Activated CD8-positive, alpha-beta memory T cell treated with anti-CD3 and anti-CD28 coated beads, Interleukin-2, amount 10 ng/mL, durations not matched to agents 7 days and 5 days (primary cell): ENCODE measurements at regions of chr1 and their contacts with region 1.

Region 1: GRCh38 chr1:31789259-31790065 is 25.3 kb upstream of the ADGRB2 start:
- DNase-seq: peak; percentile 98
- ATAC-seq: peak; percentile 82
- H3K4me3 Mint-ChIP-seq: peak overlapping the region; percentile 76
- H3K27ac Mint-ChIP-seq: peak overlapping the region; percentile 35
- H3K4me1 Mint-ChIP-seq: peaks cover 11% of the 10 kb centered on the region
- H3K27me3 Mint-ChIP-seq: no peaks in the 10 kb centered on the region

Region 2: DNA sequence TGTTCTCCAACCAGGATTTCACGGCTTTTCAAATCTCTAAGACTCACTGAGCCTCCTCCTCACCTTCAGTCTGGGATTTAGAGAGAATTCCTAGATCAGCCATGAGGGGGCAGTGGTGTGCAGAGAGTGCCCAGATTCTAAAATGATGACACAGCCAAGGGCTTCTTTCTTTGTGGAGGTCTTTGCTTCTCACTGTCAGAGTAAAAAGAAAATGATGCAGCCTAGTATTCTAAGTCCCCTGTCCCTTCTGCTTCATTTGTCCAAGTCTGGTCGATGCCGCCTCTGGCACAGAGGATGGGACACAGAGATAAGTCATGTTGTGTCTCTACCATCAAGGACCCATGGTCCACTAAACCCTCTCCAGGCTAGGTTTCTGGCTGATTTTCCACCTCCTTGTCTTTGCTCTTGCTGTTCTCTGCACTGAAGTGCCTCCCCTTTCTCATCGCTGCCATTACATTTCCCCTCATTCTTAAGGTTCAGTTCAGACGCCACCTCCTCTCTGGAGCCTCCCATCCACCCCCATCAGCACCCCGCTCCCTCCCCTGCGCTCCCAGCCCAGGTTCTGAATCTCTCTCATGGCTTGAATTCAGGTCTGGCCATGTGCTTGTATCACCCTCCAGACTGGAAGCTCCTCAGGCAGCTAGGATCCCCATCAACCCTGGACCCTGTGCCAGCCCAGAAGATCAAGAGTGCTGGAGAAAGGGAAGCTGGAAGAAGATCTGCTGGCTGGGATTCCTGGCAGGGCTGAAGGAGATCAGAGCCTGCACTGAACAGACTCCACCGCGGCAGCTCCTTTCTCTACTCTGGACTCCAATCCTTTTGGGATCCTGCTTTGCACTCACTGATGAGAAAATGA is 225.1 kb before region 1 on chr1:
- CTCF ChIA-PET with region 1: interaction called, 14 read pairs
- DNase-seq: peak; percentile 58
- ATAC-seq: peak; percentile 45
- H3K4me3 Mint-ChIP-seq: no peak overlapping the region
- H3K27ac Mint-ChIP-seq: no peak overlapping the region
- H3K4me1 Mint-ChIP-seq: no peaks in the 10 kb centered on the region
- H3K27me3 Mint-ChIP-seq: peaks cover 38% of the 10 kb centered on the region

Region 3: DNA sequence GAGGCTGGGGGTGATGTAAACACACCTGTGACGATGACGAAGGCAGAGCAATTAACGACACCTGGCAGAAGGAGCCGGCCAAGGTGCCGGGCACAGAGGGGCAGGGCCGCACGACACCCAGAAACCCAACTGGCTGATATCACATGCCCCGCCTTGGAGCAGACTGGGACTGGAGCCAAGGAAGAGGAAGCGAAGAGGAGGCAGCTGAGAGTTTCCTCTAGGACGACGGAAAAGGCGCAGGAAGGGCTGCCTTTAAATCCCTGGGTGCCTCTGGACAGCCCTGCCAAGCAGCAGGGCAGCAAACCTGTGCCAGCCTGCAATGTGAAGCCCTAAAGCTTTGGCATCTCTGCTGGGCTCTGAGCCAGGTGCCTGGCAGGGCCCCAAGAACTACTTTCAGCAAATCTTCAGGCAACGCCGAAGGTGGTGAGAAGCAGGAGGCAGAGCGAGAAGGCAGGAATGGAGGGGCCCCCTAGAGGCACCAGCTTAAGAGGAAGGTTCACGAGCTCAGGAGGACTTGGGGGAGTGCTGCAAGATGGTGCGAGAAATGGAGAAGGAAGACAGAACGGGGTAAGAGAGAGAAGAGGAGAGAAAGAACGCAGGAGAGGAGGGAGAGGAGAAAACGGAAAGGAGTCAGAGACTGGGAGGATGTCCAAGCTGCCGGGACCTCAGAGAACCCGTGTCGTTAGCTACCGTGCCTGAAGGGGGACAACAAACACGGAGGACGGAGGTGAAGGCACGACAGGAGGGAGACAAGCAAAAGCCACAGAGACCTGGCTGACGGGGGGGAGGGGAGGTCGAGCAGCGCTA is 119.5 kb before region 1 on chr1:
- CTCF ChIA-PET with region 1: interaction called, 100 read pairs
- DNase-seq: no peak
- ATAC-seq: peak; percentile 49
- H3K4me3 Mint-ChIP-seq: peak overlapping the region; percentile 14
- H3K27ac Mint-ChIP-seq: no peak overlapping the region
- H3K4me1 Mint-ChIP-seq: peaks cover 7% of the 10 kb centered on the region
- H3K27me3 Mint-ChIP-seq: peaks cover 30% of the 10 kb centered on the region

Region 4: DNA sequence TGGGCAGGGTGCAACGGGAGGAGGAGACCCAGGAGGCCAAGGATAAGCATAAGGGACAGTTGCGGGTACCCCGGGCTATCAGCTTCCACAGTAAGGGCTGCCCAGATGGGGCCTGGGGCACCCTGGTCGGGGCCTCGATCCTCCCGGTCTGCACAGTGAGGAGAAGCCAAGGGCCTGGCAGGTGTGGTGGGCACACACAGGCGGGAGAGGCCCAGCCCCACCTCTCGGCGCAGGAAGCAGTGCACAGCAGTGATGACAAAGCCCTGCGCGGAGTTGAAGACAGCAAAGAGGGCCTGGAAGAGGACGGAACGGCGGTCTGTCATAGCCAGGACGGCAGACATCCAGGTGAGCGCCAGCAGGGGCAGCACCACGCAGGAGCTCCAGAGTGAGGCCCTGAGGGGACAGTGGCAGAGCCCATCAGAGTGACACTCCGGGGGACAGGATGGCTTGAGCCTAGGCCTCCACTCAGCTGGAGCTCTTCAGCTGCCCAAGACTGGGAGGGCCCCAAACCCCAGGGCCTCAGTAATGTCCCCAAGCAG is 56.6 kb before region 1 on chr1:
- CTCF ChIA-PET with region 1: no interaction called
- DNase-seq: no peak
- ATAC-seq: no peak
- H3K4me3 Mint-ChIP-seq: no peak overlapping the region
- H3K27ac Mint-ChIP-seq: no peak overlapping the region
- H3K4me1 Mint-ChIP-seq: no peaks in the 10 kb centered on the region
- H3K27me3 Mint-ChIP-seq: no peaks in the 10 kb centered on the region

Region 5: DNA sequence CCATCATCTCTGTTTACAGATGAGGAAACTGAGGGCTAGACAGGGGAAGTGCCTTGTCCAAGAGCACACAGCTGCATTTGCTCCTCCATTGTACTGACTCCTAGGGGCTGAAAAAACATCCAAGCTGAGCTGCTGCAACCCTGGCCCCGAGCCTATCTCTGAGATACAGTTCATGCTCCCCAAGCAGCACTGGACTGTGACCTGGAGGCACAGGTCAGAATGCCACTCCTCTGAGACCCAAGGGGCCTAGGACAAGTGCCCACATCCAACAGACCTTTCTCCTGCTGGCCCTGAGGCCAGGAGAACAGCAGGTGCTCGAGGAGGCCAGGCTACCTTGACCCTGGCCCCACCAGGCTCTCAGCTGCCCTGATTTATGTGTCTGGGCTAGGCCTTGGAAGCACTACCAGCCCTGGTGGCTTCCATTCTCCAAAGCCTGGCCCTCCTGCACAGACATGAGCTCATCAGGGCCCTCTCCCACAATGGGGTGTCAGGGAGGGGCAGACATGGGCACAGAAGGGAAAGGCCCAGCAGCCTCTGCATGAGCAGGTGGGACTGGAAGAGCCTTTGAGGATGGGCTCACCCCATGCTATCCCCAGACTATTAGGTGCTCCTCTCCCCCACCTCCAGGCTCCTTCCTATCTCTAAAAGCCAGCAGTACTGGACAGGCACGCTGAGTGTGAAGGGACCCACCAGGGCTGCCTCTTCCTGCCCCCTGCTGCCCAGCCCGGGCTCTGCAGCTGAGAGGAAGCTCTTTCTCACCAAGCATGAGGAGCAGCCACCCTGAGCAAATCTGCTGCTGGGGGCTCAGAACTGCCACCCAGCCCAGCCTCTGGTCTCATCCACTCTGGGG is 44.1 kb before region 1 on chr1:
- CTCF ChIA-PET with region 1: interaction called, 25 read pairs
- DNase-seq: peak; percentile 84
- ATAC-seq: peak; percentile 88
- H3K4me3 Mint-ChIP-seq: no peak overlapping the region
- H3K27ac Mint-ChIP-seq: no peak overlapping the region
- H3K4me1 Mint-ChIP-seq: peaks cover 39% of the 10 kb centered on the region
- H3K27me3 Mint-ChIP-seq: peaks cover 8% of the 10 kb centered on the region

Region 6: DNA sequence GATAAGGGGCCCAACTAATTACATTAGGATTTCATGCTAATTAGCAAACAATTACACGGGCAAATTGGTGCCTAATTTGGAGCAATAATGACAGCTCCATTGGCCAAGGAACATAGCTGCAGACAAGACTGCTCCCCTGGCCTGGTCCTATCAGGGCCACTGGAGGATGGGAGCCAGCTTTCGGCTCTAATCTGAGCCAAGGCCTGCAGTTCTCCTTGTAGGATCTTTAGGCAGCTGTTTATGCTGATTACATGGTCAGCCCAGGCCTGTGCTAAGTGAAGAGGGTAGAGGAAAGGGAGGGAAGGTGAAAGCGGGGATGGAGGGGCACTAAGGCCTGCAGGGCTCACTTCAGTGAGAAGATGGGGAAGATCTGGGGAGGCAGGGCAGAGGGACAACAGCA is 12.9 kb before region 1 on chr1:
- CTCF ChIA-PET with region 1: interaction called, 14 read pairs
- DNase-seq: no peak
- ATAC-seq: no peak
- H3K4me3 Mint-ChIP-seq: no peak overlapping the region
- H3K27ac Mint-ChIP-seq: no peak overlapping the region
- H3K4me1 Mint-ChIP-seq: peaks cover 19% of the 10 kb centered on the region
- H3K27me3 Mint-ChIP-seq: peaks cover 56% of the 10 kb centered on the region

Region 7: DNA sequence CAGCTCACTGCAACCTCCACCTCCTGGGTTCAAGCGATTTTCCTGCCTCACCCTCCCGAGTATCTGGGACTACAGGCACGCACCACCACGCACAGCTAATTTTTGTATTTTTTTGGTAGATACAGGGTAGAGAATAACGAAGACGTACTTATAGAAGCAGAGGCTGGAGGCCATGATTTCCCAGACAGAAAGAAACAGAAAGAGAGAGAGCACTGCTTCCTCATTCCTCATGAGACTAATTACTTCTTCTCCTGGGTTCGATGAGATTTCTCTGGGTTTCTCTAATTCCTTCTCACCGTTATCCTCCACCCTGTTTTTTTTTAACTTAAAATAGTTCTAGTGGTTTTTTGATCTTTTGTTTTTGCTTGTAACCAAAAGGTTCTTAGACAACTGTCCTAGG is 172.1 kb after region 1 on chr1:
- CTCF ChIA-PET with region 1: interaction called, 45 read pairs
- DNase-seq: no peak
- ATAC-seq: no peak
- H3K4me3 Mint-ChIP-seq: no peak overlapping the region
- H3K27ac Mint-ChIP-seq: peak overlapping the region; percentile 78
- H3K4me1 Mint-ChIP-seq: peaks cover 74% of the 10 kb centered on the region
- H3K27me3 Mint-ChIP-seq: peaks cover 3% of the 10 kb centered on the region